OCI-LY7 (cell line): ENCODE measurements at regions of chr1 and their contacts with region 1.

Region 1: DNA sequence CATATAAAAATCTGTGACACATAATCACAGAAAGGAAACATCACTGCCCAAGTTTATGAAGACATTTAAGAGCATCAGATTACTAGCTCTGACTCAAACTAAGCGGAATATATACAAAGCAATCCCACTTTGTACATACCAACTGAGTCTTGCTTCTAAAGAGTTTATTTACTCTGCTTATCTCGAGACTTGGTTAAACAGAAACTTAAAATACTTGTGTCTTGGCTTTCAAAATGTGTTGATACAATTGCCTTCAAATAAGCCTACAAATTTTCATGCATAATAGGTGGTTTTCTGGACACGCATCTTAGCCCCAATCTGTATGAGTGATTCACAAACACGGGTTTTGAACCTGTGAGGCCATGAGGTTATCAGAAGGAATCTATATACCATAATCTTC is 21.0 kb downstream of the CD160 start:
- DNase-seq: no peak
- H3K4me3 ChIP-seq: no peak overlapping the region
- H3K27ac ChIP-seq: no peak overlapping the region
- H3K4me1 ChIP-seq: no peaks in the 10 kb centered on the region
- CTCF ChIP-seq: no peak

Region 2: DNA sequence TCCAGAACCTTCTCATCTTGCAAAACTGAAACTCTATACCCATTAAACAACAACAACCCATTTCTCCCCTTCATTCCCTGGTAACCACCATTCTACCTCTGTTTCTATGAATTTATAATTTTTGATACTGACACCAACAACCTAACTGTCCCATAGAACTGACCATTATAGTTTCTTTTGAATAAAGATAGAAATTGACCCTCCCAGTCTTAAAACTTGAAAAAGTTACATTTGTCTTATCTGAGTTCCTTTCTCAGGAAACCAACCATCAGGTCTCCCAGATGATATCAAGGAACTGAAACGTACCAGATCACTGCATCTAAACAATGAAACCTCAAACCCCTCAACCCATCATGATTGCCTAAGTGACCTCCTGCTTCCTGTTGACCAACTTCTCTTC is 56.5 kb after region 1 on chr1:
- CTCF ChIA-PET with region 1: no interaction called
- POLR2A ChIA-PET with region 1: no interaction called
- intact Hi-C with region 1: loop called (anchors 2 kb)
- DNase-seq: peak; percentile 23
- H3K4me3 ChIP-seq: no peak overlapping the region
- H3K27ac ChIP-seq: no peak overlapping the region
- H3K4me1 ChIP-seq: no peaks in the 10 kb centered on the region
- CTCF ChIP-seq: no peak